ENCODE measurements at regions of chr15 and their contacts with region 1.

Region 1: GRCh38 chr15:65298731-65299130 is 2.9 kb downstream of the RNU5A-1 start:
- DNase-seq: no peak
- ATAC-seq: no peak
- H3K4me3 Mint-ChIP-seq: peak overlapping the region; percentile 81
- H3K27ac Mint-ChIP-seq: peak overlapping the region; percentile 87
- H3K4me1 Mint-ChIP-seq: peaks cover 34% of the 10 kb centered on the region
- H3K27me3 Mint-ChIP-seq: no peaks in the 10 kb centered on the region
- CTCF ChIP-seq: no peak

Region 2: DNA sequence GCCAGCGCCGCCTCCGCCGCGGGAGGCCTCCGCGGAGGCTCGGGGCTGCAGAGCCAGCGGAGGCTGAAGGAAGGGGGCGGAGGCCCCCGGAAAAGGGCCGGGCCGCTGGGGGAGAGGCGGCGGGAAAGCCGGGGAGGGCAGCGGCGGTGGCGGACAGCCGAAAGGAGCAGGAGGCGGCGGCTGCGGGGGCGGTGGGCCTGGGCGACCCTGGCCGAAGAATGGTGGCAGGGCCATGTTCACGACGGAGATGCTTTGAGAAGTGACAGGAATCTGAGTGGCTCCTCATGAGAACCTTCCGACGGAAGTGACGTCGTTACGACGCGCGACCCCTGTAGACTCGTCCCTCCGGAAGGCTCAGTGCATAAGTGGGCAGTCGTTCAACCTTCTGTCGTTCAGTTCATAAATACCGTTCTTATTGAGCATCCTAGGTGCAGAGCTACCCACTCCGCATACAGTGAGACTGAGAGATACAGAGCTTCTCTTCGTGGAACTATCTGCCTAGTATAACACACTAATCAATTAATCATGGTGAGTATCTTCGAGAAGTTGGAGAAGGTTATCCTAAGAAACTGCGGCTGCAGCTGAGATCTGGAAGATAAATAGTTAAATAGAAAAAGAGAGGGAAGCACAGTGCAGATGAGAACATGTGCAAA is 165.1 kb before region 1 on chr15 and contains the start of gene PDCD7:
- CTCF ChIA-PET with region 1: interaction called, 3 read pairs
- POLR2A ChIA-PET with region 1: interaction called, 9 read pairs
- intact Hi-C with region 1: loop called (anchors 5 kb)
- DNase-seq: peak; percentile 94
- ATAC-seq: peak; percentile 96
- H3K4me3 Mint-ChIP-seq: peak within 1 kb of the TSS; percentile 86
- H3K27ac Mint-ChIP-seq: peak within 1 kb of the TSS; percentile 90
- H3K4me1 Mint-ChIP-seq: peaks cover 27% of the 10 kb centered on the region
- H3K27me3 Mint-ChIP-seq: no peaks in the 10 kb centered on the region
- CTCF ChIP-seq: no peak
- total RNA-seq, gene PDCD7: 33.8 to 35.1 TPM

Region 3: GRCh38 chr15:65421360-65422070 is 122.8 kb after region 1 on chr15:
- CTCF ChIA-PET with region 1: no interaction called
- POLR2A ChIA-PET with region 1: no interaction called
- intact Hi-C with region 1: no loop called
- DNase-seq: peak; percentile 45
- ATAC-seq: peak; percentile 56
- H3K4me3 Mint-ChIP-seq: peak overlapping the region; percentile 63
- H3K27ac Mint-ChIP-seq: no peak overlapping the region
- H3K4me1 Mint-ChIP-seq: peaks cover 14% of the 10 kb centered on the region
- H3K27me3 Mint-ChIP-seq: peaks cover 61% of the 10 kb centered on the region
- CTCF ChIP-seq: no peak

Measured in activated CD8-positive, alpha-beta T cell treated with anti-CD3 and anti-CD28 coated beads for 36 hours (primary cell).